HCT116 (cell line): ENCODE measurements at regions of chr11 and their contacts with region 1.

Region 1: DNA sequence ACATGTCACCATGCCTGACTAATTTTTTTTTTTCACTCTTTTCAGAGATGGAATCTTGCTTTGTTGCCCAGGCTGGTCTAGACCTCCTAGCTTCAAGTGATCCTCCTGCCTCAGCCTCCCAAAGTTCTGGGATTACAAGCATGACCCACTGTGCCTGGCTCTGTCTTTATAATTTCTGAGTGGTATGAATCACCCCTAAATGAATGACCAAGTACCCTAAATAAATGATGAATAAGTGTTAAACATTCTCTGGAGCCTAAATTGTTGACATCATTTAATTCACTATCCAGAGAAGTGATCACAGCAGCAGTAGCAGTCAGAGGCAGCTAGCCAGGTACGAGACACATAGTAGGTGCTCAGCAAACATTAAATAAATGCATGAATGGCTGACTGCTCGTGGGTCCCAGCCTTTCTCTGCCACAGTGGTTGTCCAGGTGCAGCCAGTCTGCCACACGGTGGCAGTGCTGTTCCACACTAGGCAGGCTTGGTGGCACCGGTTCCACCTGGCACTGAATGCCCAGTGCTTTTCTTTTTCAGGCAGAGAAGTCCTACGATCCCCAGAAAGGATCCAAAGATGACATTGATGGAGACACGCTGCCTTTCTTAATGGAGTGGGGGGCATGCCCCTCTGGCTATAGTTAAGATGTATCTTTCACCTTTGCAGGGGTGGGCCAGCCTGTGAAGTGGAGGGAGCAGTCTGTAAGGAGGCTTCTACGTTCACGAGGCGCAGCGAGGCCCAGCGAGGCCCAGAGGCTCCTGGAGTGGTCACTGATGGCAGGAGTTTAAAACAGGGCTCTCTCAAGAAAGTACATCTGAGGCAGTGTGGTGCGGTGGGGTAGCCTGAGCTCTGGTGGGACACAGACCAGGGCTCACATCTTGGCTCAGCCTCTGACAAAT is 8.7 kb upstream of the TTC12 start:
- DNase-seq: peak; percentile 53
- ATAC-seq: peak; percentile 98
- H3K4me3 ChIP-seq: no peak overlapping the region
- H3K27ac ChIP-seq: no peak overlapping the region
- H3K4me1 ChIP-seq: no peaks in the 10 kb centered on the region
- H3K27me3 ChIP-seq: peaks cover 19% of the 10 kb centered on the region
- CTCF ChIP-seq: peak; percentile 89 to 91 (median 90)
- POLR2A ChIP-seq: no peak
- RAD21 ChIP-seq: peak; percentile 97

Region 2: DNA sequence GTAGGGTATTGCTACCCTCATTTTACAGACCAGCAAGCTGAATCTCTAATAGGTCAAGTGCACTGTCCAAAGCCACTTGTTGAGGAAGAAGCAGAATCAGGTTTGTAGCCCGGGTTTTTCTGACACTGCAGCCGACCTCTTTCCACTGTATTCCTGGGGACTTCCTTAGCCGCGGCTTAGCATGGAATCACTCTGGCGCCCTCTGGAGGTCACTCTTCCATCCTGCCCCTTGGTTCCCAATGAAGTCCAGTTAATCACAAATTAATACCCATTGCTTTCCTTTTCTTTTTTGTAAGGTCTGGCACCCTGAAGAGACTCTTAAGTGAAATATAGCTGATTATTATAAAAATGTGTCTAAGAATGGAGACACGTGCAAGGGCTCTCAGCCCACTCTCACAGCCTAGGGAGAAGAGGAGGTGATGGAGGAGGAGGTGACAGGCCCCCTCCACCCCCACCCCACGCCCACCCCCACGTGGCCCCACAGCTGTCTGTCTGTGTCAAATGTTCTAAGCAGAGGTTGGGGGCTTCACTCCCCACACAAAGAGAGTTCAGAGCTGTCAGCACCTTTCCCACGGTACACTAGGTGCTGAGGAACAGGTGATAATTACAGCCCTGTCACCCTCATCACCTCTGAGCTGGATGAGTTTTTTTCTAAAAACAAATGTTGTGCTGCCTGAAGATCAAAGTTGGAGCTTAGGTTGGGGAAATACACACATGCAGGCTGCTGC is 227.2 kb after region 1 on chr11:
- CTCF ChIA-PET with region 1: no interaction called
- POLR2A ChIA-PET with region 1: no interaction called
- RAD21 ChIA-PET with region 1: no interaction called
- intact Hi-C with region 1: loop called (anchors 1 kb)
- DNase-seq: peak; percentile 49
- ATAC-seq: peak; percentile 93
- H3K4me3 ChIP-seq: no peak overlapping the region
- H3K27ac ChIP-seq: no peak overlapping the region
- H3K4me1 ChIP-seq: peaks cover 0 to 3% of the 10 kb centered on the region in 2 experiments; a peak in 1 of 4 replicates
- H3K27me3 ChIP-seq: peaks cover 36% of the 10 kb centered on the region
- CTCF ChIP-seq: peak; percentile 72 to 95 (median 88)
- POLR2A ChIP-seq: no peak
- RAD21 ChIP-seq: peak; percentile 82

Region 3: GRCh38 chr11:113730887-113731726 is 425.4 kb after region 1 on chr11:
- CTCF ChIA-PET with region 1: interaction called, 7 read pairs
- POLR2A ChIA-PET with region 1: no interaction called
- RAD21 ChIA-PET with region 1: no interaction called
- intact Hi-C with region 1: loop called (anchors 1 kb)
- DNase-seq: peak; percentile 39
- ATAC-seq: peak; percentile 72
- H3K4me3 ChIP-seq: no peak overlapping the region
- H3K27ac ChIP-seq: no peak overlapping the region
- H3K4me1 ChIP-seq: no peaks in the 10 kb centered on the region
- H3K27me3 ChIP-seq: no peaks in the 10 kb centered on the region
- CTCF ChIP-seq: peak; percentile 34 to 54 (median 47); a peak in 4 of 6 replicates
- POLR2A ChIP-seq: no peak
- RAD21 ChIP-seq: peak; percentile 82

Region 4: GRCh38 chr11:113796663-113797259 is 491.1 kb after region 1 on chr11:
- CTCF ChIA-PET with region 1: interaction called, 8 read pairs
- POLR2A ChIA-PET with region 1: no interaction called
- RAD21 ChIA-PET with region 1: no interaction called
- intact Hi-C with region 1: loop called (anchors 1 kb)
- DNase-seq: peak; percentile 12
- ATAC-seq: peak; percentile 93
- H3K4me3 ChIP-seq: no peak overlapping the region
- H3K27ac ChIP-seq: no peak overlapping the region
- H3K4me1 ChIP-seq: no peaks in the 10 kb centered on the region
- H3K27me3 ChIP-seq: no peaks in the 10 kb centered on the region
- CTCF ChIP-seq: peak; percentile 33 to 71 (median 68); a peak in 5 of 6 replicates
- POLR2A ChIP-seq: no peak
- RAD21 ChIP-seq: peak; percentile 59

Region 5: DNA sequence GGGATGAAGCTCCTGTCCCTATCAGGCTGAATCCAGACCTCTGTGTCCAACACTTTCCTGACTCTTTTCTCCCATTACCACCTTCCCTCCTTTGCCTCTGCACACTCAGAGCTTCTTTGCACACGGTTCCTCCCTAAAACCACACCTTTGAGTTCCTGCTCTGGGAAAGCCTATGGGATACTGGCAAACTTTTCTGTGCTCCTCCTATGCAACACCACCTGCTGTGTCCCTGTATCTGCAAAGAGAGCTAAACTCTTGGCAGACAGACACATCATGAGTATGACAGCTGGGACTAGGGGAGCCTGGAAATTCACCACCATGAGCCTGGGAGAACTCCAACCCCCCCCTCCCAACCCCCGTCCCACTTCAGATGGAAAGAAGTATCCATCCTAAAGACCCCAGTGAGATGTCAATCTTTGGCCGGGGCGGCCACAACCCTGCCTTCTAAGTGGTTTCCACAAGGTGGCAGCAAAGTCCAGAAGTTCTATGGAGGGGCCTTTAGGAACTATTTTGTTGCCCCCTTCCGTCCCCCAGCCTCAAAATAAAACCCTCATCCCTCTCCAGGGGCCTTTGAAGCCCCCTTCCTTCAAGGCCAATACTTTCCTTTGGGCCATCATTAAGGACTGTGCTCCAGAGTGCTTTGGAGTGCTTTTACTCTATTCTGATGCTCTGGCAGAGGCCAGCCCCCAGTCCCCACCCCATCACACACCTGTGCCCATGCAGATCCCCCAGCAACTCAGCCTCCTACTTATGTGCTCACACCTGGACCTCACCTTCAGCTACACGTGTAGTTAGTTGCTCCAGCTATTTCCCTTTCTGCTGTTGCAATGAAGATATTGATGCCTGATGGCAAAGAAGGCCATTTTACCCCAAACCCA is 688.6 kb after region 1 on chr11:
- CTCF ChIA-PET with region 1: no interaction called
- POLR2A ChIA-PET with region 1: no interaction called
- RAD21 ChIA-PET with region 1: no interaction called
- intact Hi-C with region 1: loop called (anchors 5 kb)
- DNase-seq: no peak
- ATAC-seq: peak; percentile 75
- H3K4me3 ChIP-seq: no peak overlapping the region
- H3K27ac ChIP-seq: no peak overlapping the region
- H3K4me1 ChIP-seq: no peaks in the 10 kb centered on the region
- H3K27me3 ChIP-seq: peaks cover 33% of the 10 kb centered on the region
- CTCF ChIP-seq: peak; percentile 66 to 81 (median 74)
- POLR2A ChIP-seq: no peak
- RAD21 ChIP-seq: peak; percentile 82